PC-9 (cell line): ENCODE measurements at regions of chr3 and their contacts with region 1.

Region 1: GRCh38 chr3:3532508-3532907 is 266.7 kb upstream of the LRRN1 start:
- DNase-seq: no peak
- H3K4me3 ChIP-seq: no peak overlapping the region
- H3K27ac ChIP-seq: no peak overlapping the region
- H3K4me1 ChIP-seq: no peaks in the 10 kb centered on the region
- H3K27me3 ChIP-seq: no peaks in the 10 kb centered on the region
- CTCF ChIP-seq: no peak

Region 2: GRCh38 chr3:2180634-2181033 is 1351.9 kb before region 1 on chr3:
- CTCF ChIA-PET with region 1: no interaction called
- POLR2A ChIA-PET with region 1: no interaction called
- intact Hi-C with region 1: no loop called
- DNase-seq: no peak
- H3K4me3 ChIP-seq: no peak overlapping the region
- H3K27ac ChIP-seq: no peak overlapping the region
- H3K4me1 ChIP-seq: no peaks in the 10 kb centered on the region
- H3K27me3 ChIP-seq: no peaks in the 10 kb centered on the region
- CTCF ChIP-seq: no peak

Region 3: DNA sequence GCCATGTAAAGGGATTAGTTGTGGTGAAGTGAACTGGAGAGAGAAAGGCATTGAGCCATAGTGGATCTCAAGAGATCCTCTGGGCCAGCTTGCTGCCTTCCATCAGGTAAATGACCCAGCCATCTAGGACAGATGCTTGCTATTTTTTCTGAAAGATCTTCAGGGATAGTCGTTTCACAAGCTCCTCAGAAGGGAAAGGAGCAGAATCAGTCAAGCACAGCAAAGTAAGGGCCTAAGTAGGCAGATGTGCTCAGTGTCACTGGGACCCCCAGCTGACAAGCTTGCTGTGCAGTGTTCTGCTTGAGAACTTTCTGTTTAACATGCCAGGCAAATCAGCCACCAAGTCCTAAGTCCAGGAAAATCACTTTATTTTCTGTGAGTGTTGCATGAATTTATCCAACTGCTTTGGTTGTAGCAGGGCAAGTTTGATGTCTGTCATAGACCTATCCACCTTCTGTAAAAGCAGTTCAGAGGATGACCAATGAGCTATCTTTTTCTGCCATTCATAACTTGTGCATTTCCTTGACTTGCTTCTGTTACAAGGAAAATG is 742.2 kb before region 1 on chr3:
- CTCF ChIA-PET with region 1: no interaction called
- POLR2A ChIA-PET with region 1: no interaction called
- intact Hi-C with region 1: no loop called
- DNase-seq: no peak
- H3K4me3 ChIP-seq: no peak overlapping the region
- H3K27ac ChIP-seq: no peak overlapping the region
- H3K4me1 ChIP-seq: no peaks in the 10 kb centered on the region
- H3K27me3 ChIP-seq: no peaks in the 10 kb centered on the region
- CTCF ChIP-seq: no peak

Region 4: GRCh38 chr3:3519266-3519665 is 13.2 kb before region 1 on chr3:
- CTCF ChIA-PET with region 1: no interaction called
- POLR2A ChIA-PET with region 1: interaction called, 10 read pairs
- intact Hi-C with region 1: no loop called
- DNase-seq: no peak
- H3K4me3 ChIP-seq: no peak overlapping the region
- H3K27ac ChIP-seq: no peak overlapping the region
- H3K4me1 ChIP-seq: no peaks in the 10 kb centered on the region
- H3K27me3 ChIP-seq: no peaks in the 10 kb centered on the region
- CTCF ChIP-seq: no peak